ENCODE measurements at regions of chr17 and their contacts with region 1.

Region 1: DNA sequence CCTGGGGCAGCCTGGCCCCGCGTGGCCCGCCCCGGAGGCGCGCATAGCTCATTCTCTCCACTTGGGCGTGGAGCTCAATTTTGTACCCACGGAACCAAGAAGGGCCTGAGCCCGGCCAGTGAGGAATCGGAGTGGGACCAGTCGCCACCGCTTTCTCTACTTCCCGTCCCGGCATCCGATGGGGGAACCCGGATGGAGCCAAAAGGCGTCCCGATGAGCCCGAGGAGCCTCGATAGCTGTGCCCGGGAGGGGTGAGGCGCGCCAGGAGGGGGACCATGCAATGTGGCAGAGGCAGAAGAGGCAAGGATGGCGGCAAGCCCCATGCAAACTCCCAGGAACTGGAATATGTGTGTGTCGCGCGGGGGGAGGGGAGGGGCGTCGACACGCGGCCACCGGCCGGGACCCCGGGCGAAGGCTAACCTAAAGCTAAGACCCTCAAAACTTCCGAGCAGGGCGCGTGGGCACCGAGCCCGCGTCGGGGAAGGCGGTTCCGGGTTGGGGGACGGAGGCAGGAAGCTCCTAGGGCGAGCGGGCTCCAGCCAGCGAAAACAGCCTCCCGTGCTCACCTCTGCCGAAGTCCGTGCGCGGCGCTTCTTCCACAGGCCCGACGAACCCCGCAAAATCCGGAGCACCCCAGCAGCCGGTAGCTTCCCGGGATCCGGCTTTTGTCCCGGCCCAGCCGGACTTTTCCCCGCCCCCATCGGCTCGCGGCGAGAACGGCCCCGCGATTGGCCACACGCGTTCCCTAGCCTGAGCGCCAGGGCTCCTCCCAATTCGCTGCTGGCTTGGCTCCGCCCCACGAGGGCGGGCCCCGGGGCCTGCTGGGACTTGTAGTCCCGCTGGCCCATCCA is at the start of gene ACLY:
- DNase-seq: peak; percentile 93
- ATAC-seq: peak; percentile 92
- H3K4me3 ChIP-seq: peak within 1 kb of the TSS; percentile 99
- H3K27ac ChIP-seq: peak within 1 kb of the TSS; percentile 94
- H3K4me1 ChIP-seq: peaks cover 21 to 38% of the 10 kb centered on the region in 2 experiments
- H3K27me3 ChIP-seq: no peaks in the 10 kb centered on the region
- CTCF ChIP-seq: no peak
- POLR2A ChIP-seq: peak; percentile 72
- RAD21 ChIP-seq: no peak
- total RNA-seq, gene ACLY: 222 TPM

Region 2: GRCh38 chr17:41873559-41874292 is 44.8 kb before region 1 on chr17:
- CTCF ChIA-PET with region 1: no interaction called
- POLR2A ChIA-PET with region 1: no interaction called
- RAD21 ChIA-PET with region 1: no interaction called
- intact Hi-C with region 1: no loop called
- DNase-seq: no peak
- ATAC-seq: no peak
- H3K4me3 ChIP-seq: no peak overlapping the region
- H3K27ac ChIP-seq: no peak overlapping the region
- H3K4me1 ChIP-seq: no peaks in the 10 kb centered on the region
- H3K27me3 ChIP-seq: no peaks in the 10 kb centered on the region
- CTCF ChIP-seq: no peak
- POLR2A ChIP-seq: no peak
- RAD21 ChIP-seq: no peak

Region 3: GRCh38 chr17:41930009-41930832 is 11.7 kb after region 1 on chr17 and contains the start of gene ODAD4:
- CTCF ChIA-PET with region 1: interaction called, 5 read pairs
- POLR2A ChIA-PET with region 1: interaction called, 38 read pairs
- RAD21 ChIA-PET with region 1: no interaction called
- intact Hi-C with region 1: no loop called
- DNase-seq: peak; percentile 89
- ATAC-seq: peak; percentile 99
- H3K4me3 ChIP-seq: peak within 1 kb of the TSS; percentile 67 to 78
- H3K27ac ChIP-seq: peak within 1 kb of the TSS; percentile 84
- H3K4me1 ChIP-seq: peaks cover 3 to 18% of the 10 kb centered on the region in 2 experiments; a peak in 2 of 4 replicates
- H3K27me3 ChIP-seq: no peaks in the 10 kb centered on the region
- CTCF ChIP-seq: peak in 2 of 3 experiments; percentile 41 to 44; a peak in 4 of 6 replicates
- POLR2A ChIP-seq: peak; percentile 92
- RAD21 ChIP-seq: no peak; the same call in 1 of the 2 replicates
- total RNA-seq, gene ODAD4: 0.98 TPM

Measured in HCT116 (cell line).